Caco-2 (cell line): ENCODE measurements at regions of chr9 and their contacts with region 1.

Region 1: GRCh38 chr9:107504569-107505377 is 15.2 kb upstream of the KLF4 start:
- DNase-seq: peak; percentile 56 to 61
- H3K4me3 ChIP-seq: no peak overlapping the region
- H3K4me3 Mint-ChIP-seq: no peak overlapping the region
- H3K27ac Mint-ChIP-seq: no peak overlapping the region
- H3K4me1 ChIP-seq: peaks cover 9% of the 10 kb centered on the region
- H3K4me1 Mint-ChIP-seq: peaks cover 8% of the 10 kb centered on the region
- H3K27me3 ChIP-seq: no peaks in the 10 kb centered on the region
- H3K27me3 Mint-ChIP-seq: no peaks in the 10 kb centered on the region
- CTCF ChIP-seq: no peak

Region 2: GRCh38 chr9:107539427-107540163 is 34.8 kb after region 1 on chr9:
- CTCF ChIA-PET with region 1: no interaction called
- POLR2A ChIA-PET with region 1: no interaction called
- intact Hi-C with region 1: loop called (anchors 5 kb)
- DNase-seq: peak in 1 of 2 experiments; percentile 40
- H3K4me3 ChIP-seq: no peak overlapping the region
- H3K4me3 Mint-ChIP-seq: no peak overlapping the region
- H3K27ac Mint-ChIP-seq: no peak overlapping the region
- H3K4me1 ChIP-seq: no peaks in the 10 kb centered on the region
- H3K4me1 Mint-ChIP-seq: peaks cover under 1% of the 10 kb centered on the region
- H3K27me3 ChIP-seq: no peaks in the 10 kb centered on the region
- H3K27me3 Mint-ChIP-seq: no peaks in the 10 kb centered on the region
- CTCF ChIP-seq: peak in 1 of 2 experiments; percentile 16

Region 3: DNA sequence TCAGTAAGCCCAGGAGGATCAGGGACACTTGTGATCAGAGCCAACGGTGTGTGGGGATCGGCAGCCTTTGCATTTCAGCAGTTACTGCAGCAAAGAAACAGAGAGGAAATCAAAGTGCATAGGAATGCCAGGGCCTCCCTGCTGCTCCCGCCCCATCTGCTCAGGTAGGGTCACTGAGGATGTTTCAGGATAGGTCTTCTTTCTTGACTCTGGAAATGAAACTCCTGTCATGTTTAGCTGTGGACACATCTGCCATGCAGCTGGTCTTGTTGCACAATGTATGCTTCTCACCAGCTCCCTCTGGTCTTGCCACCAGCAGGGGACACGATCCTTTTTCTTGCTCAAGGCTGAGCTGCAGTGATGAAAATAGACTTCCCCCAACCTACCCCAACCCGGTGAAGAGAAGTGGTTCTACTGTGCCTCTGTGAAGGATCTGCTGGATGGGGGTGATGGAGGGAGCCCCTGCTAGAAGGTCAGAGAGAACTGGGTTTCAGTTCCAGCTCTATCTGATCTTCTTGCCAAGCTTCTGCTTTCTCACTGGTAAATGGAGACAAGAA is 170.0 kb after region 1 on chr9:
- CTCF ChIA-PET with region 1: no interaction called
- POLR2A ChIA-PET with region 1: no interaction called
- intact Hi-C with region 1: no loop called
- DNase-seq: no peak
- H3K4me3 ChIP-seq: no peak overlapping the region
- H3K4me3 Mint-ChIP-seq: no peak overlapping the region
- H3K27ac Mint-ChIP-seq: no peak overlapping the region
- H3K4me1 ChIP-seq: no peaks in the 10 kb centered on the region
- H3K4me1 Mint-ChIP-seq: no peaks in the 10 kb centered on the region
- H3K27me3 ChIP-seq: no peaks in the 10 kb centered on the region
- H3K27me3 Mint-ChIP-seq: no peaks in the 10 kb centered on the region
- CTCF ChIP-seq: no peak